ENCODE measurements at regions of chr3 and their contacts with region 1.

Region 1: GRCh38 chr3:144556392-144556791 is 584.8 kb downstream of the DIPK2A start:
- DNase-seq: no peak
- ATAC-seq: no peak
- H3K4me3 ChIP-seq: no peak overlapping the region
- H3K4me3 Mint-ChIP-seq: no peak overlapping the region
- H3K27ac ChIP-seq: no peak overlapping the region
- H3K27ac Mint-ChIP-seq: no peak overlapping the region
- H3K4me1 ChIP-seq: no peaks in the 10 kb centered on the region
- H3K4me1 Mint-ChIP-seq: no peaks in the 10 kb centered on the region
- H3K27me3 ChIP-seq: no peaks in the 10 kb centered on the region
- H3K27me3 Mint-ChIP-seq: no peaks in the 10 kb centered on the region

Region 2: GRCh38 chr3:144590854-144591253 is 34.5 kb after region 1 on chr3:
- CTCF ChIA-PET with region 1: interaction called in 1 of 2 experiments, 14 read pairs
- POLR2A ChIA-PET with region 1: no interaction called
- DNase-seq: no peak
- ATAC-seq: no peak
- H3K4me3 ChIP-seq: no peak overlapping the region
- H3K4me3 Mint-ChIP-seq: no peak overlapping the region
- H3K27ac ChIP-seq: no peak overlapping the region
- H3K27ac Mint-ChIP-seq: no peak overlapping the region
- H3K4me1 ChIP-seq: no peaks in the 10 kb centered on the region
- H3K4me1 Mint-ChIP-seq: no peaks in the 10 kb centered on the region
- H3K27me3 ChIP-seq: no peaks in the 10 kb centered on the region
- H3K27me3 Mint-ChIP-seq: no peaks in the 10 kb centered on the region

Region 3: DNA sequence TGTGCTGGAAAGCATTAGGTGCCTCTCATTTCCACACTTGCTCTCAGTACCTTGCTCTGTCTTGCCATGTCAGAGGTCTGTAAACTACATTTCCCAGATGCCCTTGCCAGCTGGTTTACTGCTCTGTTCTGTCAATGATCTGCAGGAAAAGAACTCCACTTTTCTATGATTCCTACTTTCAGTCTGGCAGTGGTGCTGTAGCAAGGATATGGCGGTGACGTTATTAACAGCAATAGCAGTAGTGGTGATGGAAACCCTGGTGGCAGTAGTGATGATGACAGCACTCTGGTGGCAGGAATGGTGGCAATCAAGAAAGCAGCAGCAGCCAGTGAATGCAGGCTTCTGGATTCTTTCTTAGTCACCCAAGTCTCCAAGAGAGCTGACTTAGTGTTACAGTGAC is 80.4 kb after region 1 on chr3:
- CTCF ChIA-PET with region 1: no interaction called
- POLR2A ChIA-PET with region 1: no interaction called
- DNase-seq: no peak
- ATAC-seq: no peak
- H3K4me3 ChIP-seq: no peak overlapping the region
- H3K4me3 Mint-ChIP-seq: no peak overlapping the region
- H3K27ac ChIP-seq: no peak overlapping the region
- H3K27ac Mint-ChIP-seq: no peak overlapping the region
- H3K4me1 ChIP-seq: no peaks in the 10 kb centered on the region
- H3K4me1 Mint-ChIP-seq: no peaks in the 10 kb centered on the region
- H3K27me3 ChIP-seq: no peaks in the 10 kb centered on the region
- H3K27me3 Mint-ChIP-seq: no peaks in the 10 kb centered on the region

Measured in T-cell (primary cell).